Cardiac septum (tissue), 1 donor: ENCODE measurements at regions of chr10 and their contacts with region 1.

Region 1: GRCh38 chr10:48839809-48840679 is 99.6 kb downstream of the LRRC18 start:
- DNase-seq: no peak

Region 2: DNA sequence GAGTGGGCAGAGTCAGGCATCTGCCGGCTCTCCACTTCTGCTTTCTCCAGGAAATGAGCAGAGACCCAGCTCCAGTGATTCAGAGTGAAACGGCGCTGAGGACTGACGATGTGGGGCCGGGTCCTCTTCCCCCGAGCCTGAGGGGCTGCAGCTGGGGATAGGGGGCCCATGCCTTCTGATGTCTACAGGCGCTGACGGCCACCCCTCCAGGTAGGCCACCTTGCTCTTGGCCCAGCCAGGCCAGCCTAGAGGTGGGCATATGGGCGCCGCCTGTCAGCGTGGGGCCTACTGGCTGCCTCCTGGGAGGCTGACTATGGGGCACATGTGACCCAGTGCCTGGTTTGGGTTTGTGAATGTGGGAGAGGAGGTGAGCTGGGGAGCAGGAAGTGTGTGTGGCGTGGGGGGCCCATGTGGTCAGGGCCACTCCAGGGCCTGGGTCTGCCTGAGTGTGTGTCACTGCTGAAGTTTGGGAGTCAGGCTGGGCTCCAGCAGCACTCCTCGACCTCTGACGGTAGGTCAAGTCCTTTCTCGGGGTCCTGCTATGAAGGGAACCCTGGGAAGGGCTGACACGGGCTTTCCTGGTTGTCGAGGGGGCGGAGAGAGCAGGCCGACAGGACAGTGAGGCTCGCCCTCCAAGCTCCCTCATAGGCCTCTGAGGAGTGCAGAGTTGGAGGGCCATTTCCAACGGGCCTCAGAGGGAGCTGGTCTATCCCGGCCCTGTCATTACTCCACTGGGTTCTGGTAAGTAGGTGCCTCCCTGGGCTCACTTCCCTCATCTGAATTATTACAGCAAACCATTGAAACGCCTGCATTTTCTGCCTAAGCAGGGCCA is 155.0 kb before region 1 on chr10 and contains the start of gene WDFY4:
- intact Hi-C with region 1: loop called (anchors 10 kb)
- DNase-seq: no peak
- total RNA-seq, gene WDFY4: 1.5 TPM

Region 3: GRCh38 chr10:48792687-48793096 is 47.4 kb before region 1 on chr10:
- intact Hi-C with region 1: no loop called
- DNase-seq: no peak